OCI-LY7 (cell line): ENCODE measurements at regions of chr2 and their contacts with region 1.

Region 1: GRCh38 chr2:155162494-155162893 is 464.0 kb downstream of the KCNJ3 start:
- DNase-seq: no peak
- H3K4me3 ChIP-seq: no peak overlapping the region
- H3K27ac ChIP-seq: no peak overlapping the region
- H3K4me1 ChIP-seq: no peaks in the 10 kb centered on the region
- CTCF ChIP-seq: no peak

Region 2: DNA sequence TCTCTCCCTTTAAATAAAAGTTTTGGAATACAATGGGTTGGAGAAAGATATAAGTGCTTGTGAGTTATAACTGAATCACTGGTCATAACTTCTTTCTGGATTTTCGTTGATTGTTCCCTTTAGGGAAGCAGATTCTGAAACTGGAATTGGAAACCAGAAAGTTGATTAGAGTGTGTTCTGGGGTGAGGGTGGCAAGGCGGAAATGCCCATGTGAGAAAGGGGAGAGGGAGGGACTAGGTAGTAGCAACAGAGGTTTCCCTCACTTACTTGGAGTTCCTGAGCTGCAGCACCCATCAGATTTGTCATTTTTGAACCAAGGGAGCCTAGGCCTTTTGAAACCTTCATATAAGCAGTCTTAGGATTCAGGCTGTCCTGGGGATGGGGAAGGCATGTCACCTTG is 10.5 kb before region 1 on chr2:
- CTCF ChIA-PET with region 1: no interaction called
- POLR2A ChIA-PET with region 1: interaction called, 15 read pairs
- intact Hi-C with region 1: no loop called
- DNase-seq: no peak
- H3K4me3 ChIP-seq: no peak overlapping the region
- H3K27ac ChIP-seq: no peak overlapping the region
- H3K4me1 ChIP-seq: peaks cover 32% of the 10 kb centered on the region
- CTCF ChIP-seq: no peak